ENCODE measurements at regions of chr13 and their contacts with region 1.

Region 1: DNA sequence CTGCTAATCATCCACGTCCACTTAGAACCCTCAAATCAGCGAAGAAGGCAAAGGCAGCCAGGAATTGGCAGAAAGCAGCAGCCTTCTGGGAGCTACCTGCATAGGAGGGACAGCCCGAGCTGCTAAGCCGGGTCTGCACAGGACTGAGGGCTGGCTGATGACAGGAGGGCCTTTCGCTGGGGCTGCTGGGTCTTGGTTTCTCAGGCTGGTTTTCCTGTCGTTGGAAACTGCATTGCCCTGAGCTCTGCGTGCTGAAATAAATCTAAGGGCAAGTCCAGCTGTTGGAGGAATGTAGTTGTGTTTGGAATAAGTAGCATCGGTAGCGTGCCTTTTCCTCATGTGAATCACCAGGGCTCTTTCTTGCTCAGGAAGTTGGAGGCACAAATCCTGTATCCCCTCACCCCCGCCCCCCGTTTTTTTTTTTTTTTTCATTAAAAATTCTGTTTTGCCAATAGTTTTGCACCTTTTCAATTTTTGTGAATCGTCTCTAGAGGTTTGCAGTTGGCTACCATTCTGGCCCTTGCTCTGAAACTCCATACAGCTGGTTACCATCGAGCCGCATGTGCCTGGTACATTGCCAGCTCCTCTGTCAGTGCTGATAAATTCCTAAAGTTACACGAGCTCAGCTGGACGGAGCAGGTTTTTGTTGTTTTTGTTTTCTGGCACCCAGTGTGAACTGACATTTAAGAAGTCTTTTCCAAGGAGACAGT is 193.9 kb upstream of the RNF113B start:
- DNase-seq: no peak
- ATAC-seq: no peak
- H3K4me3 ChIP-seq: no peak overlapping the region
- H3K27ac ChIP-seq: no peak overlapping the region
- H3K4me1 ChIP-seq: peaks cover 15 to 19% of the 10 kb centered on the region in 2 donors
- H3K27me3 ChIP-seq: no peaks in the 10 kb centered on the region
- CTCF ChIP-seq: no peak
- POLR2A ChIP-seq: no peak

Region 2: GRCh38 chr13:98484289-98485219 is 113.6 kb after region 1 on chr13:
- in situ Hi-C with region 1: no loop called
- intact Hi-C with region 1: loop called (anchors 5 kb)
- DNase-seq: peak; percentile 79 to 95
- ATAC-seq: peak; percentile 78 to 82
- H3K4me3 ChIP-seq: peak overlapping the region; percentile 4 to 24 (median 10)
- H3K27ac ChIP-seq: peak overlapping the region; percentile 82 to 88 (median 86)
- H3K4me1 ChIP-seq: peaks cover 81 to 83% of the 10 kb centered on the region in 2 donors
- H3K27me3 ChIP-seq: no peaks in the 10 kb centered on the region
- CTCF ChIP-seq: no peak
- POLR2A ChIP-seq: peak; percentile 38 to 43

Region 3: GRCh38 chr13:98890186-98890585 is 519.2 kb after region 1 on chr13:
- in situ Hi-C with region 1: no loop called
- intact Hi-C with region 1: loop called (anchors 10 kb)
- DNase-seq: peak; percentile 43 to 52
- ATAC-seq: peak; percentile 86 to 90
- H3K4me3 ChIP-seq: no peak overlapping the region
- H3K27ac ChIP-seq: peak overlapping the region in 1 of 4 donors; percentile 32
- H3K4me1 ChIP-seq: peaks cover 0 to 6% of the 10 kb centered on the region in 2 donors
- H3K27me3 ChIP-seq: no peaks in the 10 kb centered on the region
- CTCF ChIP-seq: no peak
- POLR2A ChIP-seq: no peak

Measured in gastrocnemius medialis (tissue), 4 donors.